Vagina (tissue), 2 donors: ENCODE measurements at regions of chr1 and their contacts with region 1.

Region 1: GRCh38 chr1:243471754-243472745 is 216.2 kb downstream of the SDCCAG8 start:
- DNase-seq: no peak
- H3K4me3 ChIP-seq: no peak overlapping the region
- H3K27ac ChIP-seq: no peak overlapping the region
- H3K4me1 ChIP-seq: peaks cover 32% of the 10 kb centered on the region
- H3K27me3 ChIP-seq: no peaks in the 10 kb centered on the region
- CTCF ChIP-seq: no peak
- POLR2A ChIP-seq: no peak

Region 2: DNA sequence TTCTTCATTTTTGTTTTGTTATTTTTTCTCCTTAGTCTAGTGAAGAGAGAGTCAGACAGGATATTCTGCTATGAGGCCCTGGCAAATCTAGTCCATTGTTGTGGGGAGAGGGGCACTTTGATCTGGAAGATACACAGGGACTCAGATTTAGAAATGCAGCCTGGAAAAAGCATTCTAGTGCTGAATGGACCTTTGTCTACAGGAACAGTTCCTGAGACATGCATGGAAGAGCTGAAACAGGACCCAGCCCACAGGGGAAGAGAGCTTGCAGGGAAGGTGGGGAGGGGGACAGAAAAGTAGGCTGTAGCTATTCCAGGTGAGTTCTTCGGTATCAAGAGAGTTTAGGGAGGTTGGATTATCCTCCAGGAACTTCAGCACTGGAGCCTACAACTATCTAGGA is 279.5 kb after region 1 on chr1:
- intact Hi-C with region 1: loop called (anchors 10 kb)
- DNase-seq: no peak
- H3K4me3 ChIP-seq: no peak overlapping the region
- H3K27ac ChIP-seq: no peak overlapping the region
- H3K4me1 ChIP-seq: peaks cover 13% of the 10 kb centered on the region
- H3K27me3 ChIP-seq: no peaks in the 10 kb centered on the region
- CTCF ChIP-seq: no peak
- POLR2A ChIP-seq: no peak